Activated CD4-positive, alpha-beta T cell treated with anti-CD3 and anti-CD28 coated beads for 36 hours (primary cell): ENCODE measurements at regions of chr6 and their contacts with region 1.

Region 1: DNA sequence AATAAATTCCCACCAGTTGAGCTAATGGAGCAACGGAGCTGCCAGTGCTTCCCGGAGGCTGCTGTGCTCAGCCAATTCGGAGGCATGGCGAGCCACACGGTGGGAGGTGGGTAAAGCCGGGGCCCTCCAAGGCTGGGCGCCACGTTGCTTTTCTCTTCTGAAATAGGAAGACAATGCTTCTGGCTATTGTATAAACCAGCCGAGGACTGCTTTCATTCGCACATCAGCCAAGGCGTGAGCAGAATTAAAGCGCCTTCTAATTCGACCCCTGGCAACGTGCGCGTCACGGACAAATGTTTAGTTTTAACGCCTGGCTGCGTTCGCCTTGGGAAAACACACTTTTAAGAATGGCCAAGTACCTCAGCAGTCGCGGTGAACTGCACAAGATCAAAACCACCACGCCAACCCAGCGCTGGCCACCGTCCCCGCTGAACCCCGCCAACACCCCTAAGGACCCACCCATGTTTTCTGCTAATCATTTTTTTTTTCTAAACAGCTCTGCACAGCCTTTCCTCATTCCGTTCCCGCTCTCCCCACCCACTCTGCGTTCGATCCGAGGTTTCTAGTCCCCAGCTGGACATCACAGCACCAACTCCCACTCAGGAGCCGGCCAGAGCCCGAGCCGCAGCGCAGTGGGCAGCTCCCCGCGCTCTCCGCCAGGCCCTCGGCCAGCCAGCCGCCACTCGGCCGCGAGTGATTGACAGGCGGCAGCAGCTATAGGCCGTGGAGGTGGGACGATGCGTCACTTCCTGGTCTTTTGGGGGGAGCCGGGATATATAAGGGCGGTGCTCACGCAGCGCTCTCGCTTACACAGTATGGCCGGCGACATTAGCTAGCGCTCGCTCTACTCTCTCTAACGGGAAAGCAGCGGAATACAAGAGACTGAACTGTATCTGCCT is at the start of gene AMD1:
- DNase-seq: peak; percentile 97
- ATAC-seq: peak; percentile 79
- H3K4me3 Mint-ChIP-seq: peak within 1 kb of the TSS; percentile 93
- H3K27ac Mint-ChIP-seq: peak within 1 kb of the TSS; percentile 98
- H3K4me1 Mint-ChIP-seq: peaks cover 25% of the 10 kb centered on the region
- H3K27me3 Mint-ChIP-seq: no peaks in the 10 kb centered on the region
- total RNA-seq, gene AMD1: 90.5 to 127 TPM

Region 2: DNA sequence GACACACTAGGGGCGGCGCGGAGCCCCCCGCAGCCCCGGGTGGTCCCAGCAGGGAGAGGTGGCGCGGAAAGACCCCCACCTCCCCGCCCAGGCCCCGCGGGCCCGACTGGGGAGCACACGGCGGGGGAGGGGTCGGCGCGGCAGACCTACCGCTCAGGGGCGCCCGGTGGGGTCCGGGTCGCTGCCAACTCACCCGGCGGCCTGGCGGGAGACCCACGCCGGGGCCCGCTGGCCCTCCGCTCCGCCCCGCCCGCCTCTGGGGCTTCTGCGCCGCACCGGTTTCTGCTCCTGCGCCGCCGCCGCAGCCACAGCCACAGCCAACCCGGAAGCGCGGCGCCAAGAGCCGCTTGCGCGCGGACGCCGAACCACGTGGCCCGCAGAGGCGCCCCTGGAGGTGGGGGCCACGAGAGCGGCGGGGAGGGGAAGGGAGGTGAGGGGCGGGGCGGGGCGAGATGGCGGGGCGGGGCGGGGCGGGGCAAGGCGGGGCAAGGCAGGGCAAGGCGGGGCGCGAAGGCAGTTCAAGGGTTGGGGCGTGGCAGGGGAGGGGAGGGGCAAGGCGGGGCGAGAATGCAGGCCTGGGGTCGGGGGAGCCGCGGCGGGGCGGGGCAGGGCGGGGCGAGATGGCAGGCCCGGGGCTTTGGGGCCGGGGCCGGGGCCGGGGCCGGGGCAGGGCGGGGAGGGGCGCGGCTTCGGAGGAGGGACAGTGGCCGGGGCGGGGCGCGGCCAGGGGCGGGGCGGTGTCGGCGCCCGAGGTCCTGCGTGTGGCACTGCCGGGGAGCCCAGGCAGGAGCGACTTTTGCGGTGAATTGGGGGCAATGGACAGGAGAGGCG is 1391.1 kb before region 1 on chr6 and contains the start of gene ZBTB24:
- CTCF ChIA-PET with region 1: no interaction called
- POLR2A ChIA-PET with region 1: no interaction called
- intact Hi-C with region 1: loop called in 1 of 2 experiments (anchors 10 kb)
- DNase-seq: peak; percentile 94
- ATAC-seq: peak; percentile 84
- H3K4me3 Mint-ChIP-seq: peak within 1 kb of the TSS; percentile 96
- H3K27ac Mint-ChIP-seq: peak within 1 kb of the TSS; percentile 94
- H3K4me1 Mint-ChIP-seq: peaks cover 43% of the 10 kb centered on the region
- H3K27me3 Mint-ChIP-seq: no peaks in the 10 kb centered on the region
- total RNA-seq, gene ZBTB24: 12.0 to 14.7 TPM

Region 3: DNA sequence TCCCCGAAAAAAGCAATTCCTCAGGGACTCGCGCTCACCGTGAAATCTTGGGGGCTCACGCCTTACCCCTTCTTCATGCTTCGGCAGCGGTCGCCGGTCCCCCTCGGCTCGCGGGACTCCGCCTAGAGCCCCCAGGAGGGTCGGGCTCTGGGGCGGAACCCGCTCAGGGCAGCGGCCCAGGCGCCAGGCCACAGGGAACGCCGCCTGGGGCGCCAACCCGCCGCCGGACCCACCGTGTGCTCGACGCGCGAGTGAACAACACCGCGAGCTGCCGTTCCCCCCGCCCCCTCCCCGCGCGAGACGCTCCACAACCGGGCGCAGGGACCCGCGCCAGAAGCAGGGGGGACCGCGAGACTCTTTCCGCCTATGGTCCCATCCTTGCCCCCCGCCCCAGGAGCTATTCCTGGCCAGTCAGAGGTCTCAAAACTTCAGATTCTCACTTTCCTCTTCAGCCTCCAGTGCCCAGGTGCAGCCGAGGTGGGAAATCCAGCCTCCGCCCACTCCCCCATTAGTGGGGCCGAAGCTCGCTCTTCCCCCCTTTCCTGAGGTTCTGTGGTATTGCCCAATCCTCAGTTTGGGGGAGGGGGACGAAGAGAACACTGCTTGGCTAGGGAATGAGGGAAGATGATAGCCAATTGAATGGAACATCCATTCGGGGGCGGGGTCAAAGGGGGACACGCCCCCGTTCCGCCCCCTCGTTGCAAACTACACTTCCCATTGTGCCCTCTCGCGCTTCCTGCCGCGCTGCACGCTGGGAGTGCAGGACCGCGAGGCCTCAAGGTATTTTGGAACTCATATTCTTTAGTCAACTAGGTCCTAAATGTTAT is 694.6 kb before region 1 on chr6 and contains the start of gene WASF1:
- CTCF ChIA-PET with region 1: no interaction called
- POLR2A ChIA-PET with region 1: no interaction called
- intact Hi-C with region 1: loop called in 1 of 2 experiments (anchors 2 kb)
- DNase-seq: peak; percentile 94
- ATAC-seq: peak; percentile 89
- H3K4me3 Mint-ChIP-seq: no peak within 1 kb of the TSS
- H3K27ac Mint-ChIP-seq: peak within 1 kb of the TSS; percentile 7
- H3K4me1 Mint-ChIP-seq: peaks cover 5% of the 10 kb centered on the region
- H3K27me3 Mint-ChIP-seq: peaks cover 10% of the 10 kb centered on the region
- total RNA-seq, gene WASF1: 4.2 to 4.6 TPM

Region 4: GRCh38 chr6:110534731-110535492 is 339.3 kb before region 1 on chr6:
- CTCF ChIA-PET with region 1: no interaction called
- POLR2A ChIA-PET with region 1: no interaction called
- intact Hi-C with region 1: no loop called
- DNase-seq: no peak
- ATAC-seq: no peak
- H3K4me3 Mint-ChIP-seq: no peak overlapping the region
- H3K27ac Mint-ChIP-seq: no peak overlapping the region
- H3K4me1 Mint-ChIP-seq: peaks cover 39% of the 10 kb centered on the region
- H3K27me3 Mint-ChIP-seq: no peaks in the 10 kb centered on the region

Region 5: GRCh38 chr6:110682460-110682853 is 191.8 kb before region 1 on chr6:
- CTCF ChIA-PET with region 1: interaction called, 28 read pairs
- POLR2A ChIA-PET with region 1: interaction called, 8 read pairs
- intact Hi-C with region 1: loop called (anchors 1 kb)
- DNase-seq: peak; percentile 73
- ATAC-seq: peak; percentile 99
- H3K4me3 Mint-ChIP-seq: no peak overlapping the region
- H3K27ac Mint-ChIP-seq: no peak overlapping the region
- H3K4me1 Mint-ChIP-seq: peaks cover 12% of the 10 kb centered on the region
- H3K27me3 Mint-ChIP-seq: no peaks in the 10 kb centered on the region

Region 6: GRCh38 chr6:110693271-110693670 is 181.0 kb before region 1 on chr6:
- CTCF ChIA-PET with region 1: no interaction called
- POLR2A ChIA-PET with region 1: no interaction called
- intact Hi-C with region 1: no loop called
- DNase-seq: no peak
- ATAC-seq: no peak
- H3K4me3 Mint-ChIP-seq: no peak overlapping the region
- H3K27ac Mint-ChIP-seq: no peak overlapping the region
- H3K4me1 Mint-ChIP-seq: peaks cover 5% of the 10 kb centered on the region
- H3K27me3 Mint-ChIP-seq: no peaks in the 10 kb centered on the region

Region 7: DNA sequence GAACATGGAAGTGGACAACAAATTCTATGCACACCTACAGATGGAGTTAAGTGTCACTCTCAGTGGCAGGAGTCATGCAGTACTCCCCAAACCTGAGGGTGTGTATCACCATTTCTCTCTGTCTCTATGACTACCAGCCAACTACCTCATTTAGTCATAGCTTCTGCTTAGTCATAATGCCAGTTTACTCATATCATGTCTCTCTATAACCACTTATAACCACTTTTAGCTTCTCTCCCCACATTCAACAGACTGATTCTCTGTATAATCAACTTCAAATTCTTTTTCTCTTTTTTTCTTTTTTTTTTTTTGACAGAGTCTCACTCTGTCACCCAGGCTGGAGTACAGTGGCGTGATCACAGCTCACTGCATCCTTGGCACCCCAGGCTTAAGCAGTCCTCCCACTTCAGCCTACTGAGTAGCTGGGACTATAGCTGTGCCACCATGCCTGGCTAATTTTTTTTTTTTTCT is 70.5 kb after region 1 on chr6:
- CTCF ChIA-PET with region 1: interaction called, 7 read pairs
- POLR2A ChIA-PET with region 1: interaction called, 36 read pairs
- intact Hi-C with region 1: loop called (anchors 1 kb)
- DNase-seq: peak; percentile 71
- ATAC-seq: peak; percentile 98
- H3K4me3 Mint-ChIP-seq: no peak overlapping the region
- H3K27ac Mint-ChIP-seq: peak overlapping the region; percentile 60
- H3K4me1 Mint-ChIP-seq: peaks cover 15% of the 10 kb centered on the region
- H3K27me3 Mint-ChIP-seq: no peaks in the 10 kb centered on the region

Region 8: DNA sequence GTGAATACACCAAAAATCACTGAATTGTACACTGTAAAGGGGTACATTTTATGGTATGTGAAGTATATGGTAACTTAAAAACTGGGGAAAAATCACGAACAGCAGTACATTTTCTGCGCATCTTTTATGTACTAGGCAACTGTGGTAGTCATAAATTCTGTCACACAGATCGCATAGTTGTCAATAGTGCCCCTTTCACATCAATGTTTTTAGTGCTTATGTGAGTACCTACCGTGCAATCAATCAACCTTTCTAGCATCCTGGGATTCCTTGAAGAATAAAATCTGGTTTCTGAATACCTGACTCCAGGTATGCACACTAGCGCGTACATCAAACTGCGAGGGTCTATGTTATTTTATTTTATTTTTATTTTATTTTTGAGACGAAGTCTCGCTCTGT is 107.0 kb after region 1 on chr6:
- CTCF ChIA-PET with region 1: interaction called, 6 read pairs
- POLR2A ChIA-PET with region 1: interaction called, 13 read pairs
- intact Hi-C with region 1: loop called (anchors 1 kb)
- DNase-seq: no peak
- ATAC-seq: no peak
- H3K4me3 Mint-ChIP-seq: peak overlapping the region; percentile 99
- H3K27ac Mint-ChIP-seq: peak overlapping the region; percentile 97
- H3K4me1 Mint-ChIP-seq: peaks cover 31% of the 10 kb centered on the region
- H3K27me3 Mint-ChIP-seq: no peaks in the 10 kb centered on the region

Region 9: GRCh38 chr6:111076024-111076695 is 201.9 kb after region 1 on chr6:
- CTCF ChIA-PET with region 1: no interaction called
- POLR2A ChIA-PET with region 1: no interaction called
- intact Hi-C with region 1: no loop called
- DNase-seq: no peak
- ATAC-seq: no peak
- H3K4me3 Mint-ChIP-seq: no peak overlapping the region
- H3K27ac Mint-ChIP-seq: no peak overlapping the region
- H3K4me1 Mint-ChIP-seq: no peaks in the 10 kb centered on the region
- H3K27me3 Mint-ChIP-seq: peaks cover 3% of the 10 kb centered on the region

Region 10: DNA sequence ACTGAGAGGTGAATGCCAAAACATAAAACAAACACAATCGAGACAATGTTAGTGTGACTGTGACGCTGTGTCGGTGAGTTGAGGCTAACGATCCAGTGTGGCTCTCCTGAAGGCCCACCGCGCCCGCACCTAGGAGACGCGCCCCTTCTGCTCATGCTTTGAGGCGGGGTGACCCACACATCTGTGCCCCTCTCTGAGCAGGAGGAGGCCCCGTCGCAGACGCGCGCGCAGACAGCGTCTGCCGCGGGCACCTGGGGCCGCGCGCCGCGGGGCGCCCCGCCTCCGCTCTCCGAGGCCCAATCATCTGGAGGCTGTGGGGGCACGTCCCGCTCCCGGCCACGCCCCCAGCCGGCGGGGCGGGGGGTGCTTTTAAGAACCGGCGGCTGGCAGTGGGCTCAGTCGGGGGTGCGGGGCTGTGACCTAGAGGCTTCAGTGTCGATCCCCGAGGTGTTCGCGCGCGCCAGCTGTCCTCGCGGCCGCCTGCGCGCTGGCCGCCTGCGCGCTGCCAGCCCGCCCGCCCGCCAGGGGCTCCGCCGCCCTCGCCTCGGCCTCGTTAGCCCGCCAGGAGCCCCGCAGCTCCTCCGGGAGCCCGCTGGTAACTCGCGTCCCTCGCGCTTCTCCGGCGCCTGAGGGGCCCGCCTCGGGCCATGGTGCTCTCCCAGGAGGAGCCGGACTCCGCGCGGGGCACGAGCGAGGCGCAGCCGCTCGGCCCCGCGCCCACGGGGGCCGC is 213.0 kb after region 1 on chr6 and contains the start of gene SLC16A10:
- CTCF ChIA-PET with region 1: no interaction called
- POLR2A ChIA-PET with region 1: no interaction called
- intact Hi-C with region 1: loop called in 1 of 2 experiments (anchors 5 kb)
- DNase-seq: peak; percentile 87
- ATAC-seq: peak; percentile 90
- H3K4me3 Mint-ChIP-seq: peak within 1 kb of the TSS; percentile 91
- H3K27ac Mint-ChIP-seq: peak within 1 kb of the TSS; percentile 90
- H3K4me1 Mint-ChIP-seq: peaks cover 37% of the 10 kb centered on the region
- H3K27me3 Mint-ChIP-seq: no peaks in the 10 kb centered on the region
- total RNA-seq, gene SLC16A10: 6.2 to 7.0 TPM